OCI-LY7 (cell line): ENCODE measurements at regions of chr3 and their contacts with region 1.

Region 1: DNA sequence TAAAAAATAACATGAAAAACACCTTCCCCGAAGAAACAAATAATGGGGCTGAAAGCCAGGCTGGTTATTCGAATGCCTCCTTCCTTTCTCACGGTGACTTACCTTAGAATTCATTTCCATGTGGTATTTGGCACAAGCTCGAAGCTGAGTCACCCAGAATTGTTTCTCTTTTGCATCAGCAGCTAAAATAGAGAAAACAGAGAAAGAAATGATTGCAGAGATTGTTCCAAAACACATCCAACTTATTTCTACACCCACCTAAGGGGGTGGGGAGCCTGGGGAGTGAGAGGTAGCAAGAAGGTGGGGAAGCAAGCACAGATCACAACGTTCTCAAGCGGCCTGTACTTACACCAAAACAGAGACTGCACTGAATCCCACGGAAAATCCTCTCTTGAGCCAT is 104.7 kb downstream of the OSBPL10 start:
- DNase-seq: no peak
- H3K4me3 ChIP-seq: peak overlapping the region; percentile 68
- H3K27ac ChIP-seq: peak overlapping the region; percentile 90
- H3K4me1 ChIP-seq: peaks cover 83% of the 10 kb centered on the region
- CTCF ChIP-seq: no peak

Region 2: DNA sequence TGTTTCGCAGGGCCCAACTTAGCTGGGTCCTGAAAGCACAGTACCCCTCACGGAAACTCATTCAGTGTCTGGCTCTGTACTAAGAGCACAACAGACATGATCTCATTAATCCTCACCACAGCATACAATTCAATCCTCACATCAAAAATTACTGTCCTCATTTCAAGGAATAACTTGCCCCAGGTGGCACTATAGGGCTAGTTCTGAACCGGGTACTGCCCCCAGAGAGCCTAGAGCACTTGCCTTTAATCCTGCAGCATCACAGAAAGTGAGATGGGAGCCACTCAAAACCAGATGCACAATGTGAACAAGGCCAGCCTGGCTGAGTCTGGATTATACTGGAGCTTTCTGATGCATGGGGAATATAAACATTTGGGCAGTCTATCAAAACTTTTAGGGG is 17.9 kb before region 1 on chr3:
- CTCF ChIA-PET with region 1: no interaction called
- POLR2A ChIA-PET with region 1: interaction called, 14 read pairs
- intact Hi-C with region 1: no loop called
- DNase-seq: peak; percentile 74
- H3K4me3 ChIP-seq: no peak overlapping the region
- H3K27ac ChIP-seq: peak overlapping the region; percentile 53
- H3K4me1 ChIP-seq: peaks cover 95% of the 10 kb centered on the region
- CTCF ChIP-seq: peak; percentile 72

Region 3: GRCh38 chr3:31918179-31919168 is 42.1 kb after region 1 on chr3:
- CTCF ChIA-PET with region 1: interaction called, 3 read pairs
- POLR2A ChIA-PET with region 1: interaction called, 10 read pairs
- intact Hi-C with region 1: loop called (anchors 2 kb)
- DNase-seq: peak; percentile 65
- H3K4me3 ChIP-seq: peak overlapping the region; percentile 64
- H3K27ac ChIP-seq: peak overlapping the region; percentile 100
- H3K4me1 ChIP-seq: peaks cover 99% of the 10 kb centered on the region
- CTCF ChIP-seq: no peak